Aorta (tissue), 5 donors: ENCODE measurements at regions of chr1 and their contacts with region 1.

Region 1: DNA sequence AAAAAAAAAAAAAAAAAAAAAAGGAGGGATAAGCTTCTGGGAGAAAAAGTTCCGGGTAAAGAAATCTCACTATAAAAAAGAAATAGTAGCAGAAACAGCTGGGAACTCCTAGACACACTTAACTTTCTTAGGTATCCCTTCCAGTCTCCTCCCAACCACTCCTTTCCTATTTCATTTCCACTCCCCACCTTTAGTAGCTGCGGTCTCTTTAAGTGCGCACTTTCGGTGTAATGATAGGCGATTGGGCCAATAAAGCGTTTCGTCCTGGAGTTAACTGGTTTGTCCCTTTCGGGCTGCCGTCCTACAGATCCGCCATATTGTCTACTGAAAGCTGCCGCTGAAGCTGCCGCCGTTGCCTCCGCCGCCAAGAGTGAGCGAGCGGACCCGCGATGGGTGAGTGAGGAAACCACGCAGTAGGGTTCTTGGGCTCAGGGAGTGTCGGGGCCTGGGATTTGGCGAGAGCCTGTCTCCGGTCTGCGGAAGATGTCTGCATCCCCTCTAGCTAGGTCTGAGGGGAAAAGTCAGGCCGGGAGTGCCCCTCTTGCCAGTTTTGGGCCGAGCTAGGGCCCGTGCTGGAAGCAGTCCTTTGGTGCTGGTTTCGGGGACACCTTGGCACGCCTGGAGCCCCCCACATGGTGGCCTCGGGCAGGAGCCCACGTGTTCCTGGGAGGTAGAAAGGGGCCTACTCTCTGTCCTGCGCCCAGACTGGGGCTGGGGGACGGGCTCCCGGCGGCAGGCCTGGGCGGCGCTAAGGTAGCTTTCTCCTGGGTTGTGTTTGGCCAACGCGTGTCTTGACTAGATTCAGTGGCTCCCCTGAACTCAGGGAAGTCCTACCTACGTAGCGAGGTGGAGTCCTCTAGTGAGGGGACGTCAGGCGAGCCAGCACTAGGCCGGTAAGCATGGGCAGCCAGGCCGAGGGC is at the start of gene KPNA6:
- DNase-seq: peak; percentile 93 to 94
- ATAC-seq: peak; percentile 96
- H3K4me3 ChIP-seq: peak within 1 kb of the TSS; percentile 62 to 95
- H3K27ac ChIP-seq: peak within 1 kb of the TSS; percentile 19 to 41
- H3K4me1 ChIP-seq: peaks cover 0 to 7% of the 10 kb centered on the region in 2 donors
- H3K27me3 ChIP-seq: no peaks in the 10 kb centered on the region
- total RNA-seq, gene KPNA6: 58.4 to 66.2 TPM

Region 2: GRCh38 chr1:31843506-31843905 is 264.5 kb before region 1 on chr1:
- intact Hi-C with region 1: no loop called
- DNase-seq: peak in 1 of 2 donors; percentile 64
- ATAC-seq: no peak
- H3K4me3 ChIP-seq: no peak overlapping the region
- H3K27ac ChIP-seq: no peak overlapping the region
- H3K4me1 ChIP-seq: no peaks in the 10 kb centered on the region
- H3K27me3 ChIP-seq: no peaks in the 10 kb centered on the region

Region 3: GRCh38 chr1:32072622-32073298 is 35.2 kb before region 1 on chr1 and contains the start of gene TMEM39B:
- intact Hi-C with region 1: loop called in 1 of 2 experiments (anchors 5 kb)
- DNase-seq: peak; percentile 97 to 98
- ATAC-seq: peak; percentile 97
- H3K4me3 ChIP-seq: peak within 1 kb of the TSS; percentile 67 to 81
- H3K27ac ChIP-seq: peak within 1 kb of the TSS; percentile 83 to 85
- H3K4me1 ChIP-seq: no peaks in the 10 kb centered on the region
- H3K27me3 ChIP-seq: no peaks in the 10 kb centered on the region
- total RNA-seq, gene TMEM39B: 14.1 to 21.1 TPM

Region 4: DNA sequence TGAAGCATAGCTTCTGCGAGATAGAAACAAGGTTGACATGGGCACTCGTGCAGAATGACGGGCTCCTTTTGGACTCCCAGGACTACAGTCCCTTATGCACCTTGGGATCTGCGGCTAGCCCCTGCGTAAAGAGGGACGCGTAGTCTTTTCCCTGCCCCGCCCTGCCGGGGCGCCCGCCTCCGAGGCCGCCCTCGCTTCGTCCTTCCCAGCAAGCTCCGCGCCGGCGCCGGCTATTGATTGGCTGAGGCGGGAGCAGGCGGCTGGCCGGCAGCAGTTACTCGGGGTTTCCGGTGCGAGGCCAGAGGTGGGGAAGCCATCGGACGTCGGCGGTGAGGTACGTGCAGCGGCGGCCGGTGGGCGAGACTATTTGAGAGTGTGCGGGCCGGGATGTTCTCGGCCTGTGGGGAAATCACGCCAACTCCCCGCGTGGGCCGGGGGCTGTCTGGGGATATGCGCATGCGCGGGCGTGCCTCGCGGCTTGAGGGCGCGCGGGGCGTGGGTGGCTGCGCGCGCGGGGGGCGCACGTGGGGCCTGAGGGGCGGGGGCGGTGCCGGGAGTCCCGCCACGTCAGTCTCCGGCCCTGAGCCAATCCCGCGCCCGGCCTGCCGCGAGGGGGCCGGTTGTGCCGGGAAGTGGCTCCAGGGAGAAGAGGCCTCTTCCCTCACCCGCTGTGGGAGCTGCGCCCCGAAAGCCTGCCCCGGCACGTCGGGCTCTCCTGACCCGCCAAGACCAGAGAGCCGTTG is 71.6 kb after region 1 on chr1 and contains the start of gene TXLNA:
- intact Hi-C with region 1: loop called in 1 of 2 experiments (anchors 5 kb)
- DNase-seq: peak; percentile 97 to 98
- ATAC-seq: peak; percentile 96
- H3K4me3 ChIP-seq: peak within 1 kb of the TSS; percentile 56
- H3K27ac ChIP-seq: peak within 1 kb of the TSS; percentile 63 to 89
- H3K4me1 ChIP-seq: no peaks in the 10 kb centered on the region
- H3K27me3 ChIP-seq: no peaks in the 10 kb centered on the region
- total RNA-seq, gene TXLNA: 46.7 to 55.5 TPM